PC-3 (cell line): ENCODE measurements at regions of chr13 and their contacts with region 1.

Region 1: GRCh38 chr13:82963226-82964096 is 918.8 kb downstream of the SLITRK1 start:
- DNase-seq: no peak
- ATAC-seq: no peak
- H3K4me3 ChIP-seq: no peak overlapping the region
- H3K27ac ChIP-seq: no peak overlapping the region
- H3K4me1 ChIP-seq: no peaks in the 10 kb centered on the region
- H3K27me3 ChIP-seq: no peaks in the 10 kb centered on the region
- CTCF ChIP-seq: no peak

Region 2: DNA sequence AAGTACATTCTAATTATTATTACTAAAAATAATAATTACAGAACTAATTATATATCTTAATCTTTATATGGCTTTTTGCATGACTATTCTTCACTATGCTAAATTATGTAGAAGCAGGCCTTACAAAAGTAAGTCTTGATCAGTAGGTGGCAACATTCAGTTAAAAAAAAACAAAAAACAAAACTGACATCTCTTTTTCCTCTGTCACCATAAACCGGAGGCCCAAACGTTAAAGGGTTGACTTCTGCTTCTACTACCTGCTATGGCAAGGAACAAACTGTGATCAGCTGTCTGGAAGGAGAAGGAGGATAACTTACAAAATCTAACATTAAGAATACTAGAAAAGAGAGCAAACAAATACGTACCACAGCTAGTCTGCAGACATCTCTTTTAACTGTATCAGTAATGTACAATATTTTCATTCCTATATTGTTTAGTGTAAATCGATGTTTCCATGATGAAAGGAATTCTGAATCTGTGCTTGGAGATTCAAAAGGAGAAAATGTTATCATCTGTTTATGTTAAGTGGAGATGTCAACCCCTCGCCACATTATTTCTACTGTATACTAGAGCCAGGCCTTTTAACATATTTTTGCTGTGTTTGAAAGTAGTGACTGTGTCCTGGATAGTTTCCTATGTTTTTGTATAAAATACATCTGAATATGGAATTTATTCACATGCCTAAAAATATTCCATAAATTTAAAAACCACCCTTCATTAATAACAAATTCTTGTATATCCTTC is 606.6 kb before region 1 on chr13:
- CTCF ChIA-PET with region 1: no interaction called
- POLR2A ChIA-PET with region 1: no interaction called
- intact Hi-C with region 1: loop called (anchors 2 kb)
- DNase-seq: peak; percentile 21
- ATAC-seq: no peak
- H3K4me3 ChIP-seq: no peak overlapping the region
- H3K27ac ChIP-seq: no peak overlapping the region
- H3K4me1 ChIP-seq: peaks cover 11% of the 10 kb centered on the region
- H3K27me3 ChIP-seq: no peaks in the 10 kb centered on the region
- CTCF ChIP-seq: peak; percentile 26; the same call in 1 of the 2 replicates

Region 3: DNA sequence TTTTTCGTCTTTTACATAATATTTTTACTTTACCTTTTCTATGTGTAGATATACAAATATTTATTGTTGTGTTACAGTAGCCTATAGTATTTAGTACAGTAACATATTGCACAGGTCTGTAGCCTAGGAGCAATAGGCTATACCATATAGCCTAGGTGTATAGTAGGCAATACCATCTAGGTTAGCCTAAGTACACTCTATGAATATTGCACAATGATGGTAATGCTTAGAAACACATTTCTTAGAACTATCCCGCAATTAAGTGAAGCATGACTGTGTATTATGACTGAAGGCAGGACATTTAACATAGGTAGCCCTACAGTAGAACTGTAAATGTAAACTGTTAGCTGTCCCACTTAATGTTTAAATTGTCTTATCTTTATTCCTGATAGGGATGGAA is 45.5 kb before region 1 on chr13:
- CTCF ChIA-PET with region 1: no interaction called
- POLR2A ChIA-PET with region 1: no interaction called
- intact Hi-C with region 1: no loop called
- DNase-seq: no peak
- ATAC-seq: no peak
- H3K4me3 ChIP-seq: no peak overlapping the region
- H3K27ac ChIP-seq: no peak overlapping the region
- H3K4me1 ChIP-seq: no peaks in the 10 kb centered on the region
- H3K27me3 ChIP-seq: no peaks in the 10 kb centered on the region
- CTCF ChIP-seq: no peak